ENCODE measurements at regions of chr16 and their contacts with region 1.

Region 1: GRCh38 chr16:48365581-48366164 is 19.5 kb downstream of the SIAH1 start:
- DNase-seq: peak; percentile 91
- H3K4me3 Mint-ChIP-seq: peak overlapping the region; percentile 85
- H3K27ac Mint-ChIP-seq: peak overlapping the region; percentile 94
- H3K4me1 Mint-ChIP-seq: peaks cover 41% of the 10 kb centered on the region
- H3K27me3 Mint-ChIP-seq: no peaks in the 10 kb centered on the region

Region 2: DNA sequence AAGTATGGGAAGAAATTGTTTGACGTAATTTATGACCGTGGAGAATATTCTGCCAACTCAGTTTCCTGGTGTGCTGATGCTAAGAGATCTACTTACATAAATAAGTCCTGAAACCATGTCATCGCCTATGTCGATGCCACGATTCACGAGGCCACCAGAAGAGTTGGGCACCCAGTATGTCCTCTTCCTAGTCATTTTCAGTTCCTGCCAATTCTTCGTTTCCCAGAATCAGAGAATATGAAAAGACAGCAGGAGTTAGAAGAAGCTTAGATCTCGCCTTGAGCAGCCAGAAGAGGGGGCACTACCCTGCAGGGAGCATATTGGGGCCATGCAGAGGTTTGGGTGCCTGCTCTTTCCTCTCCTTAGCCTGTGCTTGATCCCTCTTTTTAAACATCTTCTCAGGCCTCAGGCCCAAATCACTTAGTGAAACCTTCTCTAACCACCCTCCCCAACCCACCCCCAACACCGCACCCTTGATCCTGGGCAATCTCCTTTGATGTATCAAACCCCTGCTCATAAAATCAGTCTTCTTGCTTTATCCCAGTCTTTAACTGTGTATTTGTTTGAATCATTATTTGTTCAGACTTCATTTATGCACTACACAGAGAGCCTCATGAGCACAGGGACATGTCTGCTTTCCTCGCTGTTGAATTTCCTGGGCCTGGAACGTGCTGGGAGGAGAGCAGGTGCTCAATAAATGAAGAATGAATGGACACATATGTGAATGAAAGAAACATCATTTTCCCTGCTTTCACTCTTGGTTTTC is 133.8 kb before region 1 on chr16:
- CTCF ChIA-PET with region 1: no interaction called
- POLR2A ChIA-PET with region 1: no interaction called
- intact Hi-C with region 1: loop called (anchors 5 kb)
- DNase-seq: peak; percentile 70
- H3K4me3 Mint-ChIP-seq: peak overlapping the region; percentile 6
- H3K27ac Mint-ChIP-seq: peak overlapping the region; percentile 58
- H3K4me1 Mint-ChIP-seq: peaks cover 20% of the 10 kb centered on the region
- H3K27me3 Mint-ChIP-seq: no peaks in the 10 kb centered on the region

Region 3: DNA sequence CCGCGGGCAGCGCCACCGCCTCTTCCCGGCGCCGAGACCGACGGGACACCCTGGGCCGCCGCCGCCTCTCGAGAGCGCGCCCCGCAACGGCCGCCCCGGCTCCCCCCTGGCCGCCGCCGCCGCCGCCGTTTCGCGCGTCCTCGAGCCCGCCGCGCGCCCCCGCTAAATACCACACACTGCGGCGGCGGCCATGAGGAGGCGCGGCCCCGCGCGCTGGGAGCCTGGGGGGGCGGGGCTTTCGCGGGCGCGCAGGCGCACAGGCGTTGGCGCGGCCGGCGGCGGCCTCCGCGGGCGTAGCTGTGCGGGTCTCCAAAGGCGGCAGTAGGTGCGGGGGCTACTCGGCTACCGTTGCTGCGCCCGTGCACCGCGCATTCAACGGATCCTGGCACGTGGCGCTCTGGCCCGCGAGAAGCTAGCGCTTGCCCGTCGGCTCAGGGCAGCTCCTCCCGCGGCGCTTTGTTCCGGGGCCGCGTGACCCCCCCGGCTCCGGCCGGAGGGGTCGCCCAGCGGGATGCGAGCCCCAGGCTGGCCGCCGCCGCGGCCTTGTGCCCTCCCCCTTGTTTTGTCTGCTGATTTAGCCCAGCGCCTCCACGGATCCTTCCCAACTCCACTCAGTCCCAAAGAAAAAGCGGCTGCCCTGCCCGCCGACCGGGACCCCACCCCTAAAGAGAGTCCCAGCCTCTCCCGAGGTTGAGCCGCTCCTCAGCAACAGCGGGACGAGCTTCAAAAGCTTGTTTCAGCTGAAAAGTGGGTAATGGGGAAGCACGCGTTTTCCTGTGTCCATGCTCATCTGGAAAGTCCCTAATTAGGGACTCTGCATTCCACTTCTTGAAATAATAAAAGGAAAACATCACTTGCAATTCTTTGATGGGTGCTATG is 19.8 kb after region 1 on chr16 and contains the start of gene SIAH1:
- CTCF ChIA-PET with region 1: interaction called, 3 read pairs
- POLR2A ChIA-PET with region 1: interaction called, 29 read pairs
- intact Hi-C with region 1: loop called (anchors 1 kb)
- DNase-seq: peak; percentile 88
- H3K4me3 Mint-ChIP-seq: peak within 1 kb of the TSS; percentile 92
- H3K27ac Mint-ChIP-seq: peak within 1 kb of the TSS; percentile 86
- H3K4me1 Mint-ChIP-seq: peaks cover 18% of the 10 kb centered on the region
- H3K27me3 Mint-ChIP-seq: no peaks in the 10 kb centered on the region
- total RNA-seq, gene SIAH1: 13.0 to 13.8 TPM

Region 4: GRCh38 chr16:48452977-48453760 is 87.5 kb after region 1 on chr16:
- CTCF ChIA-PET with region 1: interaction called, 3 read pairs
- POLR2A ChIA-PET with region 1: interaction called, 3 read pairs
- intact Hi-C with region 1: loop called (anchors 1 kb)
- DNase-seq: no peak
- H3K4me3 Mint-ChIP-seq: no peak overlapping the region
- H3K27ac Mint-ChIP-seq: no peak overlapping the region
- H3K4me1 Mint-ChIP-seq: peaks cover 7% of the 10 kb centered on the region
- H3K27me3 Mint-ChIP-seq: peaks cover 16% of the 10 kb centered on the region

Region 5: DNA sequence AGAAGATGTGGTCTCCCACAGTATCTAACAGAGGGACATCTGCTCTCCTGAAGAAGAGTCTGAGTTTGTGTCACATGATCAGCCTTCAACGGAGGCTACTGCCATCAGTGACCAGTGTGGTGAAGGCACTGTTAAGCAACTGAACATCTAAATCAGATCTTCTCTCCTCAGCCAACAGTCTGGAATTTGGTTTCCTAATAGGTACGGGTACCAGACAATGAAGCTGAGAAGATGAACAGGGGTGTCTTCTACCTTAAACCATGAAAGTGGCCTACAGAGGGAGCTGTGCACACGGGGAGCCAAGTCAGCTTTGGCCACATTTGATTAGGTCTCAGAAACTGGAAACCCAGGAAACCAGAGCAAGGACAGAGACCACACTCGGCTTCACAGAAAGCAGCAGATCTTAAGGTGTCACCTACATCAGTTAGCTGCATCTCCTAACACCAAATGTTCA is 1961.3 kb after region 1 on chr16:
- CTCF ChIA-PET with region 1: no interaction called
- POLR2A ChIA-PET with region 1: no interaction called
- intact Hi-C with region 1: loop called (anchors 10 kb)
- DNase-seq: peak; percentile 81
- H3K4me3 Mint-ChIP-seq: no peak overlapping the region
- H3K27ac Mint-ChIP-seq: peak overlapping the region; percentile 45
- H3K4me1 Mint-ChIP-seq: peaks cover 59% of the 10 kb centered on the region
- H3K27me3 Mint-ChIP-seq: no peaks in the 10 kb centered on the region

Measured in activated CD4-positive, alpha-beta memory T cell treated with anti-CD3 and anti-CD28 coated beads for 36 hours (primary cell).